A549 (cell line): ENCODE measurements at regions of chr11 and their contacts with region 1.

Region 1: GRCh38 chr11:60775420-60775961 is 9.6 kb upstream of the MS4A10 start:
- DNase-seq: peak; percentile 83 to 88
- ATAC-seq: peak; percentile 71 to 93
- H3K4me3 ChIP-seq: no peak overlapping the region
- H3K27ac ChIP-seq: no peak overlapping the region
- H3K4me1 ChIP-seq: peaks cover 5% of the 10 kb centered on the region; the same call in 1 of the 3 replicates
- CTCF ChIP-seq: peak; percentile 86
- EP300 ChIP-seq: no peak
- POLR2A ChIP-seq: no peak
- RAD21 ChIP-seq: peak; percentile 79 to 82

Region 2: DNA sequence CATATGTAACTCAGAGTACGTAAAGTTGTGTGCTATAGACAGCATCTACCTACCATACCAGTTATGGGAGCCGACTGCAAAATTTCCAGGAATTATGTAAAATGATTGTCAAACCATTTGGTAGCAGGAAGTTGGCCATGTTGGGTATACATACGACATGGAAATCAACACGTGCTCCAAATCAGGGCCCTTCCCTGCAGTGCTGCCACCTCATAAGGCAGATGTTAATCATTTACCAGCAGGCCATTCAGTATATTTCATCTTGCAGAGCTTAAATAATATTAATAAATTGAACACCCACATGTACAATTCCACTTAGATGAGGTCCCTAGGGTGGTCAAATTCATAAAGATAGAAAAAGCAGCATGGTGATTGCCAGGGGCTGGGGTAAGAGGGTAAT is 41.2 kb before region 1 on chr11:
- CTCF ChIA-PET with region 1: no interaction called
- POLR2A ChIA-PET with region 1: no interaction called
- DNase-seq: no peak
- ATAC-seq: no peak
- H3K4me3 ChIP-seq: no peak overlapping the region
- H3K27ac ChIP-seq: no peak overlapping the region
- H3K4me1 ChIP-seq: no peaks in the 10 kb centered on the region
- CTCF ChIP-seq: no peak
- EP300 ChIP-seq: no peak
- POLR2A ChIP-seq: no peak
- RAD21 ChIP-seq: no peak

Region 3: GRCh38 chr11:60762851-60763691 is 12.4 kb before region 1 on chr11:
- CTCF ChIA-PET with region 1: interaction called, 129 read pairs
- POLR2A ChIA-PET with region 1: no interaction called
- DNase-seq: peak in 1 of 2 experiments; percentile 36
- ATAC-seq: peak; percentile 52 to 73; a peak in 3 of 6 replicates
- H3K4me3 ChIP-seq: no peak overlapping the region
- H3K27ac ChIP-seq: no peak overlapping the region
- H3K4me1 ChIP-seq: no peaks in the 10 kb centered on the region
- CTCF ChIP-seq: peak; percentile 33
- EP300 ChIP-seq: no peak
- POLR2A ChIP-seq: no peak
- RAD21 ChIP-seq: peak in 1 of 2 experiments; percentile 20; a peak in 2 of 5 replicates

Region 4: DNA sequence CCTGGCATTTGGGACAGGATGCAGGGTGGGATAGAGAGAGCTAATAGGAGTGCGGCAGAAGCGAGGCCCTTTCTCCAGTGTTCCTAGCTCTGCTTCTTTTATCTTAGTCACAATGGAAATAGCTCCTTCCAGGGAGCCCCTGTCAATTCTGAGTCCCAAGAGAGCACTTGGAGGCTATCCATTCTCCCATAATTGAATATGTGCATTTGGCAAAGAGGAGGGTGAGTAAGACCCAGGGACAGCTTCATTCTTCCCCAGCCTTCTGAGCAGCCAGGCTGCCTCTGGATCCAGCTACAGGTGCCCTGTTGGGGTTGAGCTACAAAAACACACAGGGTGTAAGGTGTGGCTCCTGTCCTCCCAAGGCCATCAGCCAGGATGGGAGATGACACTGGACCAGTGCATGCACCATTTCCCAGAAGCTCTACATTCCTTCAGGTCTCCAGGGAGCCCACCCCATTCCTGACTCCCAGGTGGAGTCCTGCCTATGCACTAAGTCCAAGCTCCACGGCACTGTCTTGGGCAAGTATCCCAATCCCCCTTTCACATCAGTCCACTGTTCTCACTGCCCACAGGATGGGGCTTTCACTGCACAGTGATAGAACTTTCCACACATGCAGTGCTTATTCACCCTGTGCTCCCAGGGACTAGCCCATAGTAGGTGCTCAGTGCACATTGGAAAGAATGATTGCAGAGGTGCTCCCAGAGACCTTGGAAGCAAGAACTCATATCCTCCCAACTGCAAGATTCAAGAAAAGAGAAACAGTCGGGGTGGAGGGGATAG is 15.9 kb after region 1 on chr11:
- CTCF ChIA-PET with region 1: interaction called, 27 read pairs
- POLR2A ChIA-PET with region 1: interaction called, 3 read pairs
- DNase-seq: no peak
- ATAC-seq: no peak
- H3K4me3 ChIP-seq: no peak overlapping the region
- H3K27ac ChIP-seq: no peak overlapping the region
- H3K4me1 ChIP-seq: no peaks in the 10 kb centered on the region
- CTCF ChIP-seq: no peak
- EP300 ChIP-seq: no peak
- POLR2A ChIP-seq: no peak
- RAD21 ChIP-seq: no peak

Region 5: GRCh38 chr11:60866911-60867870 is 91.7 kb after region 1 on chr11 and contains the start of gene ZP1:
- CTCF ChIA-PET with region 1: interaction called, 12 read pairs
- POLR2A ChIA-PET with region 1: no interaction called
- DNase-seq: no peak
- ATAC-seq: no peak
- H3K4me3 ChIP-seq: no peak within 1 kb of the TSS
- H3K27ac ChIP-seq: no peak within 1 kb of the TSS
- H3K4me1 ChIP-seq: peaks cover 9% of the 10 kb centered on the region
- CTCF ChIP-seq: no peak
- EP300 ChIP-seq: no peak
- POLR2A ChIP-seq: no peak
- RAD21 ChIP-seq: no peak
- polyA plus RNA-seq, gene ZP1: 0.06 and 0.26 TPM in 2 replicates

Region 6: GRCh38 chr11:60899046-60899936 is 123.8 kb after region 1 on chr11:
- CTCF ChIA-PET with region 1: interaction called, 69 read pairs
- POLR2A ChIA-PET with region 1: interaction called, 3 read pairs
- DNase-seq: peak; percentile 76 to 81
- ATAC-seq: peak; percentile 85 to 97
- H3K4me3 ChIP-seq: no peak overlapping the region
- H3K27ac ChIP-seq: peak overlapping the region; percentile 46 to 75; a peak in 5 of 6 replicates
- H3K4me1 ChIP-seq: peaks cover 7% of the 10 kb centered on the region; the same call in 2 of the 3 replicates
- CTCF ChIP-seq: peak; percentile 85
- EP300 ChIP-seq: no peak
- POLR2A ChIP-seq: no peak
- RAD21 ChIP-seq: peak; percentile 45 to 55

Region 7: DNA sequence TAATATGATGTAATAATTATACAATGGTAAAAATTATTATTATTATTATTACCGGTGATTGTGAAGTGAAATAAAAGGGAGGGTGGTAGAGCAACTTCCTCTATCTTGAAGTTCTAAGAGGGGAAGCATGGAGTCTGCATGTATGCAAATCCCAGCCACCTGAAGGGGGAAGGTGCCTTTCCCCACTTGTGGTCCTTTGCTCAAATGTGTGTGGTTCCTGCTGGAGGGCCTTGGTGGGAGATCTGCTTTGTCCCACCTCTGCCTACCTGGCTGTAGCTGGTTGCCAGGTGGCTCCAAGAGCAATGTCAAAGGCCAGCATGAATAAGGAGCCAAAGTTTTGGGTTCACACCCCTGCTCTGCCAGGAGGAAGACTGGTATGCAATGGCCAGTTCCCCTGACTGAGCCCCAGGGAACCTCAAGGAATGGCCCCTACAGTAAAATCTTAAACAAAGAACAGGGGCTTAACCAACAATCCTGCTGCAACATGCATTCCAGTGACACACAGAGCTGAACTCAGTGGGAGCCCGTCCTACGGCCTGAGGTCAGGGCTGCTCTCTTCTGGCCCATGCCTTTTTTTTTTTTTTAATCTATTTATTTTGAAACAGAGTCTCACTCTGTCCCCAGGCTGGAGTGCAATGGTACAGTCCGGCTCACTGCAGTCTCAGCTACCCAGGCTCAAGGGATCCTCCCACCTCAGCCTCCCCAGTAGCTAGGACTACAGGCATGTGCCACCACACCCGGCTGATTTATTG is 157.3 kb after region 1 on chr11:
- CTCF ChIA-PET with region 1: no interaction called
- POLR2A ChIA-PET with region 1: no interaction called
- DNase-seq: no peak
- ATAC-seq: no peak
- H3K4me3 ChIP-seq: no peak overlapping the region
- H3K27ac ChIP-seq: no peak overlapping the region
- H3K4me1 ChIP-seq: no peaks in the 10 kb centered on the region
- CTCF ChIP-seq: no peak
- EP300 ChIP-seq: no peak
- POLR2A ChIP-seq: no peak
- RAD21 ChIP-seq: no peak